Endothelial cell of umbilical vein (primary cell): ENCODE measurements at regions of chr15 and their contacts with region 1.

Region 1: DNA sequence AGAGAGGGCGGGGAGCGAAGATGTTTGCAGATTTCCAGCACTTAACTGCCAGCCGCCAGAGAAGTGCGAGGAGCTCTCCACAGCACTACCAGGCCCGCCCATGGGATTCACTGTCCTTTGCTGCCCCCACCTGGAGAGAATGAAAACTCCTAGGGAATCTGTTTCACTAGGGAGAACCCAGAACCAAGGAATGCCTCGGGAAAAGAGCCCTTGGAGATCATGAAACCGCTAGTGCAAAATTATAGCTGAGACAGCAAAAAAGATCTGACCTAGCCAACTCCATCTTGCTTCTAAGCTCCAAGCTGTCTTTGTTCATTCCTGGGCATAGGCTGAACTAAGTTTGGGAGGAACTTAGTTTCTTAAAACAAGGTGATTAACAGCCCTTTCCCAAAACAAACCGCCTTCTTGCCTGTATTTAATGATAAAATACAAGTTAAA is 82.6 kb upstream of the GCNT3 start:
- DNase-seq: peak; percentile 84
- H3K4me3 ChIP-seq: no peak overlapping the region
- H3K27ac ChIP-seq: no peak overlapping the region
- H3K4me1 ChIP-seq: no peaks in the 10 kb centered on the region
- H3K27me3 ChIP-seq: no peaks in the 10 kb centered on the region
- CTCF ChIP-seq: peak; percentile 78 to 84
- POLR2A ChIP-seq: no peak

Region 2: DNA sequence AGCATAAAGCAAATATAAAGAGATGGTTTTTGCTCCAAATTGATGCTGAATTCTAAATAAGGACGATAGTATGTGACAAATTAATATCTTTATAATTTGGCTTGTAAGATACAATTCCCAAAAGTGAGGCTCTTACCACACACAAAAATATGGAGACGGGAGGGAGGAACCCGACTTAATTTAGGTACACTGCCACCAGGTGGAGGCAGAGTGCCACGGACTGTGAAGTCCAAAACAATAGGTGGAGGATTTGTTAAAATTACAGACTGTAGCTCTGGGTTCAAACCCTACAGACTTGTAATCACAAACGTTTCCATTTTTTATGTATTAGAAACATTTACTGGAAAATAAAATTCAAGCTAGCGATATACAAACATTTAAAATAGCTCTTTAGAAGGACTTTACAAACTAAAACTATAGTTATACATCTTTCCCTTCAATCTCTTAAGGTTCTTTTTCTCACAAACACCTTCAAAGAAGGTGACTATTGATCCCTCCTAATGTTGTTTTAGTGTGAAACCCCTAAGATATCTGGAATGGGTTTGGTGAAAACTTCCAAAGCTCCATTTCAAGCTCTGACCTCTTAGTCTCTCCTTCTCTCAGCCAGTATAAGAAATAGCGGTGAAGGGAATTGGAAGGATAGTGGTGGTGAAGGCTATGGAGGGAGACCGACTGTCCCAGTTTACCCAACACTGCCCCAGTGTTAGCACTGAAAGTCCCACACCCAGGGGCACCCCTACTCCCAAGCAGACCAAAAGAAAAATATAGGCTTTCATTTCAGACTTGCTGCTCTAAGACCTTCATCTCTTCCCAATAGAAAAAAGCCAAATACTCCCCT is 1301.1 kb before region 1 on chr15:
- CTCF ChIA-PET with region 1: interaction called, 40 read pairs
- POLR2A ChIA-PET with region 1: no interaction called
- dilution Hi-C with region 1: no loop called
- intact Hi-C with region 1: no loop called
- DNase-seq: peak; percentile 79
- H3K4me3 ChIP-seq: no peak overlapping the region
- H3K27ac ChIP-seq: no peak overlapping the region
- H3K4me1 ChIP-seq: peaks cover 2% of the 10 kb centered on the region
- H3K27me3 ChIP-seq: peaks cover 13 to 18% of the 10 kb centered on the region in 2 experiments
- CTCF ChIP-seq: peak; percentile 69 to 76
- POLR2A ChIP-seq: no peak

Region 3: DNA sequence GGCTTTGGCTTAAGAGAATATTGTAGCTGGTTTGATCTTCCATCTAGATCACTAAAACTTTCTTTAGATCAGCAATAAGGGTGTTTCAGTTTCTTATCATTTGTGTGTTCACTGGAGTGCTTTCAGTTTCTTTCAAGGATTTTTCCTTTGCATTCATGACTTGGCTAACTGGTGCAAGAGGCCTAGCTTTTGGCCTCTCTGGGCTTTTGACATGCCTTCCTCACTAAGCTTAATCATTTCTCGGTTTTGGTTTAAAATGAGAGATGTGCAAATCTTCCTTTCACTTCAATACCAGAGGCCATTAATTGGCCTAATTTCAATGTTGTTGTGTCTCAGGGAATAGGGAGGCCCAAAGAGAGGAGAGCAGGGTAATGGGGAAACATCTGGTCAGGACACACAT is 454.4 kb before region 1 on chr15:
- CTCF ChIA-PET with region 1: no interaction called
- POLR2A ChIA-PET with region 1: no interaction called
- dilution Hi-C with region 1: no loop called
- intact Hi-C with region 1: no loop called
- DNase-seq: no peak
- H3K4me3 ChIP-seq: no peak overlapping the region
- H3K27ac ChIP-seq: no peak overlapping the region
- H3K4me1 ChIP-seq: no peaks in the 10 kb centered on the region
- H3K27me3 ChIP-seq: no peaks in the 10 kb centered on the region
- CTCF ChIP-seq: no peak
- POLR2A ChIP-seq: no peak

Region 4: GRCh38 chr15:59191855-59192237 is 337.1 kb before region 1 on chr15:
- CTCF ChIA-PET with region 1: no interaction called
- POLR2A ChIA-PET with region 1: no interaction called
- dilution Hi-C with region 1: no loop called
- intact Hi-C with region 1: no loop called
- DNase-seq: peak; percentile 75
- H3K4me3 ChIP-seq: peak overlapping the region in 1 of 3 experiments; percentile 1
- H3K27ac ChIP-seq: peak overlapping the region; percentile 87
- H3K4me1 ChIP-seq: peaks cover 27% of the 10 kb centered on the region
- H3K27me3 ChIP-seq: no peaks in the 10 kb centered on the region
- CTCF ChIP-seq: no peak
- POLR2A ChIP-seq: no peak

Region 5: GRCh38 chr15:59501597-59501996 is 27.4 kb before region 1 on chr15:
- CTCF ChIA-PET with region 1: interaction called, 50 read pairs
- POLR2A ChIA-PET with region 1: no interaction called
- dilution Hi-C with region 1: no loop called
- intact Hi-C with region 1: no loop called
- DNase-seq: peak; percentile 72
- H3K4me3 ChIP-seq: no peak overlapping the region
- H3K27ac ChIP-seq: no peak overlapping the region
- H3K4me1 ChIP-seq: no peaks in the 10 kb centered on the region
- H3K27me3 ChIP-seq: peaks cover 4 to 6% of the 10 kb centered on the region in 2 experiments
- CTCF ChIP-seq: peak; percentile 54 to 66
- POLR2A ChIP-seq: no peak

Region 6: DNA sequence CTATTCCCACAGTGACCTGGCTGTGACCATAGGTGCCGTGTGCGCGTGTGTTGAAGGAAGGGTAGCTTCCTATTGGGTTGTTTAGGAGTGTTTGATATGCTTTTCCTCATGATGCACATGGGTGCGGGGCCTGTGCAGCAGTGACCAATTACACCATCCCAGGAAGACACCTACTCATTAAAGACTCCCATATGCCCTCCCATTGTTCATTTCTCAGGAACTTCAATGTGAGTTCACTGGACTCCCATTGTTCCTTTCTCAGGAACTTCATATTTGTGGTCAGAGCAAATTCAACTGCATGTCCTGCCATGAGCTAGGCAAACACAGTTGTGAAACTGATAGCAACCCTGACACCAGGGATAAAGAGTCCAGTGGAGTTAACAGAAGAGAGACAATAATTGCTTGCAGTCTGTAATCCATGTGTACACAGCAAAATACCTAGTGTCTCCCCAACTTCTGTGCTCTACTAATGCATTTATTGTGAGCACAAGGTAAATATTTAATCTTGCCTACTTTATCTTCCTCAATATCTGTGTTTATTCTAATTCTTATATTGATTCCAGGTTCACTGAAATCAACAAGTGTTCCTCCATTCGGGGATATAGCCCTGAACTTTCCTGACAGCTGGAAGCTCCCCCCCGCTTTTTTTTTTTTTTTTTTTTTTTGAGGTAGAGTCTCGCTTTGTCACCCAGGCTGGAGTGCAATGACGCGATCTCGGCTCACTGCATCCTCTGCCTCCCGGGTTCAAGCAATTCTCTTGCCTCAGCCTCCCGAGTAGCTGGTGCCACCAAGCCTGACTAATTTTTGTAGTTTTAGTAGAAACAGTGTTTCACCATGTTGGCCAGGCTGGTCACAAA is 25.1 kb after region 1 on chr15:
- CTCF ChIA-PET with region 1: interaction called, 18 read pairs
- POLR2A ChIA-PET with region 1: no interaction called
- dilution Hi-C with region 1: no loop called
- intact Hi-C with region 1: no loop called
- DNase-seq: peak; percentile 32
- H3K4me3 ChIP-seq: no peak overlapping the region
- H3K27ac ChIP-seq: no peak overlapping the region
- H3K4me1 ChIP-seq: no peaks in the 10 kb centered on the region
- H3K27me3 ChIP-seq: peaks cover 0 to 2% of the 10 kb centered on the region in 2 experiments
- CTCF ChIP-seq: no peak
- POLR2A ChIP-seq: no peak

Region 7: DNA sequence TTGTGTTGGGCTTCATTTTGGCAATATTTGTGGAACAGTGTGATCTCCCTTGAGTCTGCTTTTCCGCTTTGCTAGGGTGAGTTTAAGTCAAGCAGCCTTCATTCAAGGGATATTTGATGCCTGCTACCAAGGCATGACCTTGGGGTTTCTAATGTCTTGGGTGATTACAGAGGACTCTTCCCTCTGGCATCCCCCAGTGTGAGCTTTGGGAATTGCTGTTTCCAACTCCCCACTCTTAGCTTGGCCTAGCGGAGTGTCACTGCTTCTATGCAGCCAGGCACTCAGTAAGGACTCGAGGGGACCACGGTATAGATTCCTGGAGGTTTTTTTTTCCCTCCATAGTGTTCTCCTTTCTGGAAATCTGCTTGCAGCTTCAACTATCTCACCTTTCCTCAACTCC is 103.7 kb after region 1 on chr15:
- CTCF ChIA-PET with region 1: interaction called, 19 read pairs
- POLR2A ChIA-PET with region 1: no interaction called
- dilution Hi-C with region 1: no loop called
- intact Hi-C with region 1: no loop called
- DNase-seq: no peak
- H3K4me3 ChIP-seq: no peak overlapping the region
- H3K27ac ChIP-seq: no peak overlapping the region
- H3K4me1 ChIP-seq: no peaks in the 10 kb centered on the region
- H3K27me3 ChIP-seq: peaks cover 2 to 6% of the 10 kb centered on the region in 2 experiments
- CTCF ChIP-seq: peak in 1 of 2 donors; percentile 15
- POLR2A ChIP-seq: no peak

Region 8: DNA sequence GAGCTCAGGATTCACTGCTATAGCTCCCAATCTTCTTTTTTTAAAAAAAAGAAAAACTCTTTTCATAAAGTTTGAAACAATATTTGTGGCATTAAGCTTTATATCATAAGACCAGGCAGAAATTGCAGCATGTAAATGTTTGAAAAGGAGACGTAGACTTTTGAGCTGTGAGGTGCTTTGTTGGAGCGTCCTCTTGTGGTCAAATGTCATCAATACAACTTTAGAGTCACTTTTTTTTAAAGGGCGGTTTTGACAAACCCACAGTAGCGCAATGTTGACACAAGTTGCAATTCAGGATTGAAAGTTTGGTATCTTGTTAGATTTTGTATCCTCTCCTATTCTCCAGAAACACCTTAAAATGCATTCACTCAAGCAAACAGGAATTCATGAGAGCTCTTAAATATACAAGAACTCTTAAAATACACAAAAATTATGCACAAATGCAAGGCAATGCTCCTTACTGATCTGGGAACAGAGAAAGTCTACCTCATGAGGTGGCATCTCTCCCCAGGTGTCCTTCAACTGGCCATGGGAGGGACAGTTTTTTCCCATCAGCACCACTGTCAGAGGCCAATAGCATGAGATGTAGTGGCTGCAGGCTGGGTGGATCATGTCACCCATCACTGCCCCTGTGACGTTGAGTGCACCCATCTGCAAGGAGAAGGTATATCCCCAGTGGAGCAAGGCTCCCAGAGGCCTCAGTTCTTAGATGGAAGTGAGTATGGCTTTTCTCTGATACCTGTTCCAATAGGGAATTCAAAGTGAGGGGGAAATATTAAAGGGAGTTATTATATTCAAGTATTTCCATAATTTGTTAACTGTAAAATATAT is 798.1 kb after region 1 on chr15:
- CTCF ChIA-PET with region 1: interaction called, 12 read pairs
- POLR2A ChIA-PET with region 1: no interaction called
- dilution Hi-C with region 1: no loop called
- intact Hi-C with region 1: loop called (anchors 5 kb)
- DNase-seq: peak; percentile 74
- H3K4me3 ChIP-seq: no peak overlapping the region
- H3K27ac ChIP-seq: no peak overlapping the region
- H3K4me1 ChIP-seq: no peaks in the 10 kb centered on the region
- H3K27me3 ChIP-seq: peaks cover 30 to 54% of the 10 kb centered on the region in 2 experiments
- CTCF ChIP-seq: peak; percentile 64 to 75
- POLR2A ChIP-seq: no peak